Activated T-helper 2 cell treated with anti-CD3 and anti-CD28 coated beads, Interferon-gamma antibody, Interleukin-2, Interleukin-4, amounts not matched to agents 10 μg/mL and 5 μg/mL and 100 μg/mL, durations not matched to agents 14 hours and 24 hours and 36 hours (primary cell): ENCODE measurements at regions of chr12 and their contacts with region 1.

Region 1: DNA sequence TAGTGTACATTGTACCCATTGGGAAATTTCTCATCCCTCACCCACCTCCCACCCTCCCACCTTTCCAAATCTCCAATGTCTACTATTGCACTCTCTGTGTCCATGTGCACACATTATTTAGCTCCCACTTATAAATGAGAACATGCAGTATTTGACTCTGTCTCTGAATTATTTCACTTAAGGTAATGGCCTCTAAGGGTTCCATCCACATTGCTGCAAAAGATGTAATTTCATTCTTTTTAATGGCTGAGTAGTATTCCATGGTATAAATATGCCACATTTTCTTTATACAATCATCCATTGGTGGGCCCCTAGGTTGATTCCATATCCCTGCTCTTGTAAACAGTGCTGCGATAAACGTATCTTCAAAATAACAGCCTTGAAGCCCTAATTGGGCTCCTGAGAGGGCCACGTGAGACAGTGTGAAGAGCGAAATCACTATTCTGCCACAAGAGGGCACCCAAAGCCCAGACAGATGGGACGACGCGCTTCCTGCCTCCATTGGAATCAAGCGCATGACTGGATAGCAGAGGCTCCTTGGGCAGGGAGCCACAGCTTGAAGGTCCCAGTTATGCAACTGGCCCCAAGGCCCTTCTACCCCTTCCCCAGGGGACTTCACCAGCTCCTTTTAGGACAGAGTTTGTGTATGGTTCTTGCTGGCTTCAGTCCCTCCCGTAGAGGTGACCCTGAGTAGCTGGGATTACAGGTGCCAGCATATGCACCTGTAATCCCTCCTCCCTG is 21.3 kb upstream of the CD27 start:
- DNase-seq: peak; percentile 71
- H3K4me3 Mint-ChIP-seq: no peak overlapping the region
- H3K27ac Mint-ChIP-seq: peak overlapping the region; percentile 46
- H3K4me1 Mint-ChIP-seq: peaks cover 40% of the 10 kb centered on the region
- H3K27me3 Mint-ChIP-seq: peaks cover 2% of the 10 kb centered on the region

Region 2: GRCh38 chr12:6047249-6048237 is 375.9 kb before region 1 on chr12:
- intact Hi-C with region 1: no loop called
- DNase-seq: no peak
- H3K4me3 Mint-ChIP-seq: no peak overlapping the region
- H3K27ac Mint-ChIP-seq: no peak overlapping the region
- H3K4me1 Mint-ChIP-seq: no peaks in the 10 kb centered on the region
- H3K27me3 Mint-ChIP-seq: no peaks in the 10 kb centered on the region

Region 3: GRCh38 chr12:6443361-6443983 is 20.0 kb after region 1 on chr12:
- intact Hi-C with region 1: loop called (anchors 1 kb)
- DNase-seq: no peak
- H3K4me3 Mint-ChIP-seq: peak overlapping the region; percentile 65
- H3K27ac Mint-ChIP-seq: peak overlapping the region; percentile 91
- H3K4me1 Mint-ChIP-seq: peaks cover 59% of the 10 kb centered on the region
- H3K27me3 Mint-ChIP-seq: no peaks in the 10 kb centered on the region

Region 4: GRCh38 chr12:6461401-6462233 is 38.2 kb after region 1 on chr12:
- intact Hi-C with region 1: loop called (anchors 1 kb)
- DNase-seq: peak; percentile 83
- H3K4me3 Mint-ChIP-seq: peak overlapping the region; percentile 75
- H3K27ac Mint-ChIP-seq: peak overlapping the region; percentile 99
- H3K4me1 Mint-ChIP-seq: peaks cover 67% of the 10 kb centered on the region
- H3K27me3 Mint-ChIP-seq: no peaks in the 10 kb centered on the region

Region 5: GRCh38 chr12:6493497-6494257 is 70.2 kb after region 1 on chr12 and contains the start of gene NCAPD2:
- intact Hi-C with region 1: loop called (anchors 1 kb)
- DNase-seq: peak; percentile 97
- H3K4me3 Mint-ChIP-seq: peak within 1 kb of the TSS; percentile 93
- H3K27ac Mint-ChIP-seq: peak within 1 kb of the TSS; percentile 97
- H3K4me1 Mint-ChIP-seq: peaks cover 29% of the 10 kb centered on the region
- H3K27me3 Mint-ChIP-seq: no peaks in the 10 kb centered on the region
- total RNA-seq, gene NCAPD2: 114 and 120 TPM in 2 replicates

Region 6: DNA sequence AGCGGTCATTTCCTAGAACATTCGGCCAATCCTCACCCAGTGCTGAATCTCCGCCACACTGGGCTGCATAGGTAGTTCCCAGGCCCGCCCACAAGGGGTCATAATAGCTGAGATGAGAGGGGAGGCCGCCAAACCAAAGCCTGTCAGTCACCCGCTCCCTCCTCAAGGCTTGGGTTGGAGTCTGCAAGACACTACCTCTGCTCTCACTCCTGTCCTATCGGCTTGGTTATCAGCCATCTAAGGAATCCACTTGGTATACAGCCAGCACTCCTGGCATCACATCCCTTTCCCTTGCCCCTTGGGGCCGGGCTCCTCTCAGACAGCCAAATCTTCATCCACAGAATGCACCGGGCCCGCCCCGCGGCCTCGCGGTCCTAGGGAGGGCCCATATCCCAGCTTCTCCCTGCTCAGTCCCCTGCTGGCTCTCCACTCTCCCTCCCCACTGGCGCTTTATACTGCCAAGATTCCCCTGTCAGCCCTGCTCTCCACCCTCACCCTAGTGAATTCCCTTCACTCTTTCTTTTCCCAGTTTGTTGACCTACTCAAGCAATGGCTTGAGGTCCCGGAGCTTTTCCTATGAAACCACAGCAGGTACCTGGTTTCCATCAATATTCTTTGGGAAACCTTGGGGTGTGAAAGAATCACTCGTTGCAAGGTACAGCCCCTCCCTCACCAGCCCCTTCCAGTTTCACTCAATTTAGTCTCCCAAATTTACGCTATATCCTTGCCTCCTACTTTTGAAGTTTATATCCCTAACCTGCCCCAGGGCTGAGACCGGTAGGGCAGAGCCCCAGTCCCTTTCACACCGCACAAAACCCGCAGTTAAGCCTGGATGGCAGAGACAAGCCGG is 131.0 kb after region 1 on chr12:
- intact Hi-C with region 1: loop called (anchors 5 kb)
- DNase-seq: peak; percentile 51
- H3K4me3 Mint-ChIP-seq: peak overlapping the region; percentile 90
- H3K27ac Mint-ChIP-seq: peak overlapping the region; percentile 17
- H3K4me1 Mint-ChIP-seq: peaks cover 32% of the 10 kb centered on the region
- H3K27me3 Mint-ChIP-seq: no peaks in the 10 kb centered on the region

Region 7: GRCh38 chr12:6632026-6632983 is 208.9 kb after region 1 on chr12:
- intact Hi-C with region 1: no loop called
- DNase-seq: peak; percentile 50
- H3K4me3 Mint-ChIP-seq: peak overlapping the region; percentile 69
- H3K27ac Mint-ChIP-seq: peak overlapping the region; percentile 94
- H3K4me1 Mint-ChIP-seq: peaks cover 53% of the 10 kb centered on the region
- H3K27me3 Mint-ChIP-seq: no peaks in the 10 kb centered on the region